HEK293T (cell line): ENCODE measurements at regions of chr2 and their contacts with region 1.

Region 1: DNA sequence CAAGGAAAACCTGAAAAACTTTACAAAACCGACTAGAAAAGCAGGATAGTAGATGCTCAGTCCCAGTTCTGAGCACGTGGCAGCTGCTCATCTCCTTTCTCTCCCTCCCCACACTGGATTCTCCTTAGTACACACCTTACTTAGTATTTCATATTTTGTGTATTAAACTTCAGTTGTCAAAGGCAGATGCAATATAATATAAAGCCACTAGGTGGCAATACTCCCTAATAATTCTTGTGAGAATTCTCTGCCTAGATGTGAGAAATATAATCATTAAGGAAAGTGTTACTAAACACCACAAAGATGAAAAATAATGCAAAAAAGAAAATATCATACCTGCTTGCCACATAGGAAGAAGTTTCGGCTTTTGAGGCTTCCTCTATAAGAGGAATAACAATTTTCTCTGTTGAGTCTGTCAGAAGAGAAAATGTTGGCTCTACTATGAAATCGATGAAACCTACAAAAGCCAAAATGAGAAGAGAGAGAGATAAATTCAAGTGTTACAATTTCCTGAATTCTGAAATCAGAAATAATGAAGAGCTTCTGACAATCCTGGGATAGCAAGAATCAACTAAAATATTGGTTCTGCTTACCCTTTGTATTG is 200.6 kb downstream of the PPP1R1C start:
- DNase-seq: peak; percentile 12

Region 2: GRCh38 chr2:182649316-182649715 is 463.1 kb after region 1 on chr2:
- CTCF ChIA-PET with region 1: interaction called, 29 read pairs
- POLR2A ChIA-PET with region 1: no interaction called
- DNase-seq: peak; percentile 48